ENCODE measurements at regions of chr6 and their contacts with region 1.

Region 1: DNA sequence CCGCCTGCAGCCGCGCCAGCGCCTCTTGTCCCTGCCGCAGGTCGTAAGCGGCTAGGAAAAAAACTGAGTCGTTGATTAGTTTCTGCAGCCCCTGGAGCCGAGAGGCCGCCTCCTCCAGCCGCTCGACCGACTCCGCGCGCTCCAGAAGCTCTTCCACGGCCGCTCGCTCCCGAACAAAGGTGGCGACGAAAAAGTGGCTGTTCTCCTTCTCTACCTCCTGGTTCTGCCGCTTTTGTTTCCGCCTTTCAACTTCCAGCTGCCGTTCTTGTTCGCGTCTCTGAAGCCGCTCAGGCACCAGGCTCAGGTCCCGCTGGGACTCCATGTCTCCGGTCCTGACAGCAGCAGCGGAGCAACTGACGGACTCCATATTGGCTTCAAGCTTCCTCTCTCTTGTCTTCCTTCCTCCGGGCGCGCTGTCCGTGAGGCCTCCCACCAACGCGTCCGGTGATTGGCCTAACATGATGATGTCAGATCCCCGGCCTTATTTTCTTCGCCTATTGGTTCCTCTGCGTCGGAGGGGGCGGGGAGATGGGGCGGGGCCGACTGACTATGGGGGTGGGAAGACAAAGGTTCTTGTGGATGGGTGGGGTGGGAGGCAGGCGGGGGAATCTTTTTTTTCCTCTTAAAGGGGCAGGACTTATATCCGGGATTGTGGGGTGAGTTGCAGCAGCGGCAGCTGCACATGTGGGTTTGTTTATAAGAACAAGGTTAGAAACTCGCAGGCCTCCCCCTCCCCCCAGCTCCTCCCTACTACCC is at the start of gene TBCC:
- DNase-seq: peak; percentile 73 to 97 (median 93)
- ATAC-seq: peak; percentile 88
- H3K4me3 ChIP-seq: peak within 1 kb of the TSS; percentile 95
- H3K4me3 Mint-ChIP-seq: peak within 1 kb of the TSS; percentile 91 to 100 (median 99)
- H3K27ac ChIP-seq: peak within 1 kb of the TSS; percentile 88
- H3K27ac Mint-ChIP-seq: peak within 1 kb of the TSS; percentile 97 to 100 (median 100)
- H3K4me1 ChIP-seq: peaks cover 19 to 29% of the 10 kb centered on the region in 2 donors
- H3K4me1 Mint-ChIP-seq: peaks cover 12 to 39% (median 27%) of the 10 kb centered on the region in 7 donors
- H3K27me3 ChIP-seq: no peaks in the 10 kb centered on the region
- H3K27me3 Mint-ChIP-seq: no peaks in the 10 kb centered on the region
- total RNA-seq, gene TBCC: 39.6 to 74.8 (median 71.4) TPM

Region 2: GRCh38 chr6:40922281-40922680 is 1823.6 kb before region 1 on chr6:
- CTCF ChIA-PET with region 1: no interaction called
- POLR2A ChIA-PET with region 1: no interaction called
- intact Hi-C with region 1: no loop called
- DNase-seq: no peak
- ATAC-seq: no peak
- H3K4me3 ChIP-seq: no peak overlapping the region
- H3K4me3 Mint-ChIP-seq: no peak overlapping the region
- H3K27ac ChIP-seq: no peak overlapping the region
- H3K27ac Mint-ChIP-seq: no peak overlapping the region
- H3K4me1 ChIP-seq: no peaks in the 10 kb centered on the region
- H3K4me1 Mint-ChIP-seq: peaks cover 0 to 2% (median 0%) of the 10 kb centered on the region in 7 donors
- H3K27me3 ChIP-seq: no peaks in the 10 kb centered on the region
- H3K27me3 Mint-ChIP-seq: peaks cover 15 to 31% (median 21%) of the 10 kb centered on the region in 5 donors

Region 3: DNA sequence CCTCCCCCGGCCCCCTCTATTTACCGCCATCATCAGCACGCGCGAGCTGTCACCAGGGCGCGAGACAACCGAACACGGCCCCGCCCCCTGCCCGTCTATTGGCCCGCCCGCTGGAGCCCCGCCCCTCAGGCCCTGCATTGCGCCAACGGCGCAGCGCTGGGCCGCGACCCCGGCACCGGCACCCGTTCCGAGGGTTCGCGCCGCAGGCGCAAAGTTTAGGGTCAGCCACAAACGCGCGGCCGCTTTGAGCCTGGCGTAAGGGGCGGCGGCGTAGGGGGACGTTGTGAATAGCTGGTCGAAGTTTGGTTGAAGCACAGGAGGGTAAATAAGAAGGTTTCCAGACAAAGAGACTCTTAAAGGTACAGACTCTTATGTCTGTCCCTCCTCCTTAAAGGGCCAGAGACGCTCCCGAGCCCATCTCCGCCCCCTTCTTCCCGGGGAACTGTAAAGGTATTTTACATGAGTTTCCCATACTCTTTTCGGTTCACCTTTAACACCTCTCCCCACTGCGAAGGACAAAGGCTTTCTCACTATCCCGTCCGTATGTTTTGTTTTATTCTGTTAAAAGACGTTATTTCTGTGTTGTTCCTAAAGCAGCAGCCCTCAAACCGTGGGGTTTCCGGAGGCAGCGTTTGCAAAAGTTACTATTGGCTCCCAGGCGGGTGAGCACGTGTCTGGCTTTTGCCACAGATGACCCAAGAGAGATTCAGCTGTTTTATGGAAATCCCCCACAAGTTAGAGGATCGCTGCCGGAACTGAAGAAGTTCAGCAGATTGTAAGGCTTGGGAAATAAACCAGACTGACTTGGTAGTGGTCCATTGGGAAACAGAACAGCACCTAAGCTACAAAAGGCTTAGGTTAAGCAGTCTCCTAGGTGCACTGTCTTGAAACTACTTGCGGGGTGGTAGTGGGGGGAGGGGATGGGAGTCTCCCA is 850.3 kb before region 1 on chr6 and contains the start of gene USP49:
- CTCF ChIA-PET with region 1: no interaction called
- POLR2A ChIA-PET with region 1: no interaction called
- intact Hi-C with region 1: loop called in 1 of 2 experiments (anchors 5 kb)
- DNase-seq: peak; percentile 83 to 92 (median 90)
- ATAC-seq: peak; percentile 97
- H3K4me3 ChIP-seq: peak within 1 kb of the TSS; percentile 69
- H3K4me3 Mint-ChIP-seq: peak within 1 kb of the TSS in 1 of 10 donors; percentile 94
- H3K27ac ChIP-seq: peak within 1 kb of the TSS; percentile 76
- H3K27ac Mint-ChIP-seq: peak within 1 kb of the TSS in 7 of 9 donors; percentile 78 to 97 (median 93)
- H3K4me1 ChIP-seq: peaks cover 14 to 26% of the 10 kb centered on the region in 2 donors
- H3K4me1 Mint-ChIP-seq: peaks cover 5 to 17% (median 11%) of the 10 kb centered on the region in 7 donors
- H3K27me3 ChIP-seq: no peaks in the 10 kb centered on the region
- H3K27me3 Mint-ChIP-seq: peaks cover 0 to 7% (median 0%) of the 10 kb centered on the region in 5 donors
- total RNA-seq, gene USP49: 1.8 to 6.0 (median 3.1) TPM

Region 4: DNA sequence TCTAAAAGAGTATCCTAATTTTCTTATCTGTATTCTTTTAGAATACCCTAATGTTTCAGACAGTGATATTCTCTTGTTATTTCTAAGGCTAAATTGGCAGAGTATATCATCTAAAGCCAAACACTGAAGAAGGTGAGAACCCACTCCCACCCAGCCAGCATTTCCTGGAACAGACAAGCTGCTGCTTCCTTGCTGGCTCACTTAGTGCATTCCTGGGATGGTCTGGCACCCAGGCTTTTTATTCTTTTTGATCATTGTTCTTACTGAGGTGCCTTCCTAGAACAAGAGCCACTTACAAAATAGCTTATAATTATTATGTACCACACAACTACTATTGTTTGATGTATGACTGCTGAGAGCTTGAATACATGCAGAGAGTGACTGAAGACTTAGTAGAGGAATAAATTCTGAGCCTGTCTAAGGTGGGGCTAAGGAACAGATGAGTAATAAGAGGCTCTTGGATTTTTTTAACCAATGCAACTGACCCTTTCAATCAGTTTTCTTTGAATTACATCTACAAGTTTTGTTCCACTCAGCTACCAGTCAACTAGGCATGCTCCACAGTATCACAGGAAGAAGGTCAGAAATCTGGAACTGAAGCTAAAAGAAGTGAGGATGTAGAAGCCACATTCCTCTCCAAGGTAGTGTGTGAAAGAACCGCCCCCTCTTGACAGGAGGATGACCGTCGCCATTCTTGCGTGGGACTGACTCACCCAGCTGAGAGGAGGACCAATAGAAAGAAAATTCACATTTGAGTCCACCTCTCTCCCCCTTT is 53.6 kb before region 1 on chr6:
- CTCF ChIA-PET with region 1: no interaction called
- POLR2A ChIA-PET with region 1: interaction called, 23 read pairs
- intact Hi-C with region 1: no loop called
- DNase-seq: no peak
- ATAC-seq: no peak
- H3K4me3 ChIP-seq: no peak overlapping the region
- H3K4me3 Mint-ChIP-seq: no peak overlapping the region
- H3K27ac ChIP-seq: no peak overlapping the region
- H3K27ac Mint-ChIP-seq: peak overlapping the region; percentile 39 to 87 (median 77)
- H3K4me1 ChIP-seq: peaks cover 10 to 16% of the 10 kb centered on the region in 2 donors
- H3K4me1 Mint-ChIP-seq: peaks cover 19 to 60% (median 40%) of the 10 kb centered on the region in 7 donors
- H3K27me3 ChIP-seq: no peaks in the 10 kb centered on the region
- H3K27me3 Mint-ChIP-seq: no peaks in the 10 kb centered on the region

Region 5: DNA sequence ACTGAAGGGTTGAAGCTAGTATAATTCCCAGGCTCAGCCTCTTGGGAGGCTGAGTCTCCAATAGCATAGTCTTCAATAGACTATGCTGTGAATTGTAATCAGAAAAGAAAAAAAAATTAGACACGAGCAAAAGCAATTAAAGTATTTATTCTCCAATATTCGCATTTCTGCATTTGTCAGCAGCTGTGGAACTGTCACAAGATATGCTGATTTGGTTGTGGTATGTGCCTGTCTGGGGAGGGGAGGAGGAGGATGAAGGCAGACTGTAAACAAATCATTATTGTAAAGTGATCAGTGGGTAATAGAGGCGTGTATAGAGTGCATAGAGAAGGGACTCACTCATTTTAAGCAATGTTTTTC is 25.8 kb after region 1 on chr6:
- CTCF ChIA-PET with region 1: interaction called, 34 read pairs
- POLR2A ChIA-PET with region 1: interaction called, 1,628 read pairs
- intact Hi-C with region 1: loop called (anchors 1 kb)
- DNase-seq: peak in 1 of 9 donors; percentile 63
- ATAC-seq: peak; percentile 35
- H3K4me3 ChIP-seq: peak overlapping the region; percentile 50
- H3K4me3 Mint-ChIP-seq: peak overlapping the region; percentile 67 to 91 (median 84)
- H3K27ac ChIP-seq: peak overlapping the region; percentile 91
- H3K27ac Mint-ChIP-seq: peak overlapping the region; percentile 99 to 100 (median 100)
- H3K4me1 ChIP-seq: peaks cover 67 to 72% of the 10 kb centered on the region in 2 donors
- H3K4me1 Mint-ChIP-seq: peaks cover 49 to 86% (median 75%) of the 10 kb centered on the region in 7 donors
- H3K27me3 ChIP-seq: no peaks in the 10 kb centered on the region
- H3K27me3 Mint-ChIP-seq: no peaks in the 10 kb centered on the region

Region 6: DNA sequence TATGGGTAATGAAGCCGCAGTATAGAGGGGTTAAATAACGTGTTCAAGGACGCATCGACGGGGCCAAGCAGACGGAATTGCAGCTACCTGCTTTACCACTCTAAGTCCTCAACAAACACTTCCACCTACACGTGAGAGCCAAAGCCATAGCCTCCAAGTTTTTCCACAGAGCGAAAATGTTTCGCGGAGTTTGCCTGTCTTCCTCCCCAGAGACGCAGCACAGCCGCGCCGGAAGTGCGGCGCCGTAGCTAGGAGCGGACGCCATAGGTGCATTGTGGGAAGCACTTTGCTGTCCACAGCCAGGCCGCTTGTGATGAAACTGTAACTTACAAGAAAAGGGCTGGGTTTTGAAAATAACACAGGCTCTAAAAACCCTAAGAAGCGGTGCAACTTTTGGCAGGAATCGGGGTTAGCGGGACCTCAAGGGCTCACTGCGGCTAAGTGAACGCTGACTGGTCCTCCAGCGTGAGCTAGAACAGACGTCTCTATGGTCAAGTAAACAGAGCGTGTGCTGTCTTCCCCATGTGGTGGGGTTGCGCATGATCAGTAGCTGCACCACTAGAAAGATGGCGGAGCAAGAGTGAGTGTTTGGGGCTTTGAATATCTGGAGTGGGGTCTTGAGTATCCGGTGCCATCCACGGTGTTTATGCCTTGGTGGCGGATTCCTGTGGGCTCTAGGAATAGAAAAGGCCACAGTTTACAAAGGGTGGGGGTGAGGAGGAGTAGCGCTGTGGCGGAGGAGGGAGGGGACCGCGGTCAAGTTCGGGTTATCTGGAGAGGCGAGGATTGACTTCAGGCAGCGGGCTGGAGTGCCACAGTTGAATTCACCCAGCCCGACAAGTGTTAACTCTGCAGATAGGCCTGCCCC is 133.7 kb after region 1 on chr6 and contains the start of gene RPL7L1:
- CTCF ChIA-PET with region 1: interaction called, 4 read pairs
- POLR2A ChIA-PET with region 1: interaction called, 48 read pairs
- intact Hi-C with region 1: loop called (anchors 1 kb)
- DNase-seq: peak; percentile 70 to 93 (median 88)
- ATAC-seq: peak; percentile 95
- H3K4me3 ChIP-seq: peak within 1 kb of the TSS; percentile 82
- H3K4me3 Mint-ChIP-seq: peak within 1 kb of the TSS; percentile 93 to 99 (median 96)
- H3K27ac ChIP-seq: peak within 1 kb of the TSS; percentile 89
- H3K27ac Mint-ChIP-seq: peak within 1 kb of the TSS; percentile 98 to 100 (median 99)
- H3K4me1 ChIP-seq: peaks cover 5 to 7% of the 10 kb centered on the region in 2 donors
- H3K4me1 Mint-ChIP-seq: peaks cover 7 to 40% (median 29%) of the 10 kb centered on the region in 7 donors
- H3K27me3 ChIP-seq: no peaks in the 10 kb centered on the region
- H3K27me3 Mint-ChIP-seq: no peaks in the 10 kb centered on the region
- total RNA-seq, gene RPL7L1: 65.6 to 91.7 (median 78.1) TPM

Region 7: GRCh38 chr6:43059168-43060033 is 313.5 kb after region 1 on chr6 and contains the starts of genes KLC4 and MRPL2:
- CTCF ChIA-PET with region 1: no interaction called
- POLR2A ChIA-PET with region 1: interaction called, 3 read pairs
- intact Hi-C with region 1: loop called in 1 of 2 experiments (anchors 2 kb)
- DNase-seq: peak; percentile 79 to 98 (median 95)
- ATAC-seq: peak; percentile 99
- H3K4me3 ChIP-seq: peak within 1 kb of the TSS; percentile 80
- H3K4me3 Mint-ChIP-seq: peak within 1 kb of the TSS; percentile 88 to 100 (median 96)
- H3K27ac ChIP-seq: peak within 1 kb of the TSS; percentile 88
- H3K27ac Mint-ChIP-seq: peak within 1 kb of the TSS; percentile 95 to 100 (median 99)
- H3K4me1 ChIP-seq: peaks cover 0 to 21% of the 10 kb centered on the region in 2 donors
- H3K4me1 Mint-ChIP-seq: peaks cover 28 to 50% (median 45%) of the 10 kb centered on the region in 7 donors
- H3K27me3 ChIP-seq: no peaks in the 10 kb centered on the region
- H3K27me3 Mint-ChIP-seq: no peaks in the 10 kb centered on the region
- total RNA-seq, gene KLC4: 16.5 to 56.9 (median 42.5) TPM
- total RNA-seq, gene MRPL2: 32.0 to 57.5 (median 47.7) TPM

Measured in naive thymus-derived CD4-positive, alpha-beta T cell (primary cell).